ENCODE measurements at regions of chr18 and their contacts with region 1.

Region 1: DNA sequence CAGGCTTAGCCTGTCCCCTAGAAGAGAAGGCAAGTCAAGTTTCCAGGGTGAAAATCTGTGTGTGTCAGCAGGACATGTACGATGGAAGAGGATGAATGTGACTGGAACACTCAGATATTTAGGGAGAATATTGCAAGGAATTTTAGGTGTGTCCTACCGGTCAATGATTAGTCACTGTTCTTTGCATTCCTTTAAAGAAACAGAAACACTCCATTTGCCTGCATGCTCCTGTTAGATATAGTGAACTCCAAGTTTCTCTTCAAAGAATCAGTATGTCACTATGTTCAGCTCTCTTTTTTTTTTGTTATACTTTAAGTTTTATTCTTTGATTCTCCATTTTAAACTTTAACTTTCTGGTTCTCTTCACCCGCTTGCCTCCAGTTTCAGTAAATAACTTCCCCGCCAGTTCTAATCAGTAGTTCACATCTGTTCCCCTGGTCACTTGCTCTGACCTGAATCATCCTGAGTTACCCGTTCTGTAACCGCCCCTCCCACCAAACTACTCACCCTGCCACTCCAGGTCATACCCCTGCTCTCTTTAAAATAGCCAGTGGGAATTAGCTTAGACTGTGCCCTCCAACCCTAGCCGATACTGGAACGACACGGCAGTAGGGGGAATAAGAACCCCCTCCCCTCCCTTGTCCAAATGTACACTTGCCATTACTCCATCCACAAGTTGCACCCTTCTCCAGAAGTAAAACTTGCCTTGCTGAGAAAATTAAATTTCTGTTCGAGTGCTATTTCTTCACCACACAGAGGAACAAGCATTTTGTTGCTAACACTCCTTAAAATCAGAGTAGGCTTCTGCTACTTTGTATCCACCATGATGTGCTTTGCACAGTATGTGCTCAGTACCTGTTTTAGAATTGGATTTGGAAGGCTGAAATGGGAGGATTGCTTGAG is 268.4 kb downstream of the METTL4 start:
- DNase-seq: peak; percentile 93
- ATAC-seq: peak; percentile 78
- H3K4me3 ChIP-seq: peak overlapping the region; percentile 44
- H3K27ac ChIP-seq: peak overlapping the region; percentile 93
- H3K4me1 ChIP-seq: peaks cover 51% of the 10 kb centered on the region
- H3K27me3 ChIP-seq: no peaks in the 10 kb centered on the region
- CTCF ChIP-seq: no peak

Region 2: DNA sequence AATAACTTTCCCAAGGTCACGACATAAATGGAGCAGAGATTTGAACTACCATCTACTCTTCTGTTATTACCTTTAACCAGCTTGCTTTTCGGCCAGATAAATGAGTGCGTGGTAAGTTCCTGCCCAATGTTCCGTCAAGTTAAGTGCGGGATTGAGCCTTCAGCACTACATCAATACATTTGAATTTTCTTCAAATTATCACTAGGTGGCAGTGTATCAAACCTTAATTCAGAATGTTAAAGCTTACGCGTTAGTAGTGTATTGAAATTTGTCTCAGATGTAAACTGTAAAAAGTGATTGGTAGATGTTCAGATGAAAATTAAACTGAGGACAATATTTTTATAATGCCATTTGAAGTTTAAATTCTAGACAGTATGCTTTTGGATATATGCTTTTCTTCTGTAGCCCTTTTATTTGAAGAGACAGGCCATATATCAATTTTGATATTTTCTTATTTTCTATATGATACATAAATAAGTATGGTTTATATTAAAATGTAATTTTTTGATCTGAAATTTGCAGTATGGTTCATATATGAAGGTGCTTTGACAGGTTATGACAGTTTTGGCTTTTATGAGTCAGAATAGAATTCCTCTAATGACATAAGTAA is 716.9 kb before region 1 on chr18:
- CTCF ChIA-PET with region 1: no interaction called
- POLR2A ChIA-PET with region 1: no interaction called
- intact Hi-C with region 1: loop called (anchors 5 kb)
- DNase-seq: peak; percentile 69
- ATAC-seq: peak; percentile 78
- H3K4me3 ChIP-seq: no peak overlapping the region
- H3K27ac ChIP-seq: no peak overlapping the region
- H3K4me1 ChIP-seq: no peaks in the 10 kb centered on the region
- H3K27me3 ChIP-seq: peaks cover 73% of the 10 kb centered on the region
- CTCF ChIP-seq: peak; percentile 73

Region 3: DNA sequence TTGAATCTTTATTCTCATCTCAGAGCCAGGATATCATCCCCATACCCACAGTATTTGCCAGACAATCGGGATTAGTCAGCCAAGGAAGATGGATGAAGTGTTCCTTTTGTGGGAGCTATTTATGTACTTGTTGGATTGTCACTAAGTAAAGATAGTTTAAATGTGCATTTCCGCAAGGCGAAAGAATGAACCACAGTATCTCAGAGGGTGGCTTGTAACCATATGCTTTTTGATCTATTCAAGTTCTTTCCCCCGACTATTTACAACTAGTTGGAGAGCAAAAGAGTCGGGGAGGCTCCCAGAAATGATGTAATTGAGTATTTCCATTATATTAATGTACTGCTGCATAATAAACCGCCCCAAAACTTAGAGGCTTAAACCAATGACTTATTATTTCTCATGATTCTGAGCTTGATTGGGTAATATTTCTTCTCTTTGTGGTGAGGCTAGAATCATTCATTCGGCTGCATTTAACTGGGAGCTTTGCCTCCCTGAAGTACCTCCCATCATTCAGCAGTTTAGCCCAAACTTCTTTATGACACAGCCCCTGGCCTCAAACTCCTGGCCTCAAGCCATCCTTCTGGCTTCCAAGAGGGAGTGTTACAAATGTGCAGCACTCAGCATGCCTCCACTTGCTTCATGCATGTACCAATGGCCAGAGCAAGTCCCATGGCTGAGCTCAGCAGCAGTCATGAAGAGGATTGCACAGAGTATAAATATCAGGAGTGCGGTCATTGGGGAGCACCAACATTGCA is 155.2 kb before region 1 on chr18:
- CTCF ChIA-PET with region 1: no interaction called
- POLR2A ChIA-PET with region 1: no interaction called
- intact Hi-C with region 1: loop called (anchors 1 kb)
- DNase-seq: peak; percentile 85
- ATAC-seq: peak; percentile 76
- H3K4me3 ChIP-seq: peak overlapping the region; percentile 37; the same call in 1 of the 2 replicates
- H3K27ac ChIP-seq: peak overlapping the region; percentile 90
- H3K4me1 ChIP-seq: peaks cover 35% of the 10 kb centered on the region
- H3K27me3 ChIP-seq: no peaks in the 10 kb centered on the region
- CTCF ChIP-seq: no peak

Region 4: GRCh38 chr18:2258954-2259353 is 43.9 kb before region 1 on chr18:
- CTCF ChIA-PET with region 1: no interaction called
- POLR2A ChIA-PET with region 1: no interaction called
- intact Hi-C with region 1: loop called (anchors 2 kb)
- DNase-seq: peak; percentile 89
- ATAC-seq: peak; percentile 81
- H3K4me3 ChIP-seq: peak overlapping the region; percentile 22; the same call in 1 of the 2 replicates
- H3K27ac ChIP-seq: peak overlapping the region; percentile 13
- H3K4me1 ChIP-seq: peaks cover 37% of the 10 kb centered on the region
- H3K27me3 ChIP-seq: no peaks in the 10 kb centered on the region
- CTCF ChIP-seq: no peak

Region 5: GRCh38 chr18:2515908-2516625 is 213.2 kb after region 1 on chr18:
- CTCF ChIA-PET with region 1: no interaction called
- POLR2A ChIA-PET with region 1: no interaction called
- intact Hi-C with region 1: loop called (anchors 1 kb)
- DNase-seq: peak; percentile 98
- ATAC-seq: peak; percentile 92
- H3K4me3 ChIP-seq: peak overlapping the region; percentile 20
- H3K27ac ChIP-seq: peak overlapping the region; percentile 95
- H3K4me1 ChIP-seq: peaks cover 36% of the 10 kb centered on the region
- H3K27me3 ChIP-seq: no peaks in the 10 kb centered on the region
- CTCF ChIP-seq: no peak

Region 6: GRCh38 chr18:3816610-3817363 is 1513.9 kb after region 1 on chr18:
- CTCF ChIA-PET with region 1: no interaction called
- POLR2A ChIA-PET with region 1: no interaction called
- intact Hi-C with region 1: no loop called
- DNase-seq: peak; percentile 42
- ATAC-seq: no peak
- H3K4me3 ChIP-seq: no peak overlapping the region
- H3K27ac ChIP-seq: no peak overlapping the region
- H3K4me1 ChIP-seq: no peaks in the 10 kb centered on the region
- H3K27me3 ChIP-seq: peaks cover 20% of the 10 kb centered on the region
- CTCF ChIP-seq: no peak

Measured in PC-3 (cell line).